Ascending aorta (tissue), 2 donors: ENCODE measurements at regions of chr16 and their contacts with region 1.

Region 1: GRCh38 chr16:28277537-28278388 is 14.6 kb upstream of the SBK1 start:
- DNase-seq: peak; percentile 24 to 89
- H3K4me3 ChIP-seq: peak overlapping the region; percentile 52 to 58
- H3K27ac ChIP-seq: no peak overlapping the region
- H3K4me1 ChIP-seq: no peaks in the 10 kb centered on the region
- H3K27me3 ChIP-seq: no peaks in the 10 kb centered on the region
- CTCF ChIP-seq: peak; percentile 86 to 98 (median 90)

Region 2: DNA sequence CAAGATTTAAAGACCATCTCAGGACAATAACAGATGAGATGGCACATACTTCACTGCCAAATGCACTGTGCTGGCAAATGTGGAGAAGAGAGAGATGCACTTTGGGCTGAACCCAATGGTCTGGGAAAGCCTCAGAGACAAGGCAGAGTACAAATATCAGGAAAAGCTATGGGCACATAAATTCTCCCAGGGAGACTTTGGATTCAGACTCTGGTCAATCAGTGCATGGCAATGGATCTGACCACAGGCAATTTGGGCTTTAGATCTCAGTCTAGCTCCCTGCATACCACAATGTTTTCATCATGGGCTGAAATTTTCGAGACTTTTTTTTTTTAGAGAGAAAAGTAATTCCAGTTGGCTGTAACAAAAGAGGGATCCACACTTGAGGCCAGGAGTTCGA is 46.0 kb before region 1 on chr16:
- intact Hi-C with region 1: no loop called
- DNase-seq: no peak
- H3K4me3 ChIP-seq: no peak overlapping the region
- H3K27ac ChIP-seq: no peak overlapping the region
- H3K4me1 ChIP-seq: no peaks in the 10 kb centered on the region
- H3K27me3 ChIP-seq: no peaks in the 10 kb centered on the region
- CTCF ChIP-seq: no peak

Region 3: DNA sequence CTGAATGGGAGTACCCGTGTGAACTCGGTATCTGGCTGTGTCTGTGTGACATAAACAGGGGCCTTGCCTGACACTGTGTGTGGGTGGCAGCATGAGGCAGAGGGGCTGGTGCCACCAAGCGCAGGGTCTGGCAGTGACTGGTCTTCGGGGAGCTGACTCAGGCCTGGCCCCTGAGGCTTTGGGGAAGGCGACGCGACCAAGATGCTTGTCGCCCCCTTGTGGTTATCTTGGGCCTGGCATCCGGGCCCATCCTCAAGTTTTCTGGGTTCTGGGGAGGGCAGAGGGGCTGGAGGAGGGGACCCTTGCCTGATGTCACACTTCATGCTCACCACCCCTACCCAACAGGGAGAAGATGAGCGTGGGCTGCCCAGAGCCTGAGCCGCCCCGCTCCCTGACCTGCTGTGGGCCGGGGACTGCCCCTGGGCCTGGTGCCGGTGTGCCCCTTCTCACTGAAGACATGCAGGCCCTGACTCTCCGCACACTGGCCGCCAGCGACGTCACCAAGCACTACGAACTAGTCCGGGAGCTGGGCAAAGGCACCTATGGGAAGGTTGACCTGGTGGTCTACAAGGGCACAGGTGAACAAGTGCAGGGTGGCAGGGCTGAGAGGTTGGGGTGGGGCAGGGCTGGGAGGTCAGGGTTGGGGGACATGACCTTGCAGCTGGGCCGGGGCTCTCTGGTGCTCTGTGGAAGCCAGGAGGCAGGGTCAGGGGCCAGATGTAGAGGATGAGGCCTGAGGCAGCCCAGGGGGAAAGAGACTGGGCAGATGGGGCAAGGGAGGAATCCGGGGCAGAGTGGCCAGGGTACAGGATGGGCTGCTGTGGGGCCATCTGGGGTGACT is 39.5 kb after region 1 on chr16:
- intact Hi-C with region 1: loop called (anchors 1 kb)
- DNase-seq: no peak
- H3K4me3 ChIP-seq: no peak overlapping the region
- H3K27ac ChIP-seq: no peak overlapping the region
- H3K4me1 ChIP-seq: no peaks in the 10 kb centered on the region
- H3K27me3 ChIP-seq: no peaks in the 10 kb centered on the region
- CTCF ChIP-seq: peak; percentile 61 to 74 (median 70)